ENCODE measurements at regions of chr5 and their contacts with region 1.

Region 1: DNA sequence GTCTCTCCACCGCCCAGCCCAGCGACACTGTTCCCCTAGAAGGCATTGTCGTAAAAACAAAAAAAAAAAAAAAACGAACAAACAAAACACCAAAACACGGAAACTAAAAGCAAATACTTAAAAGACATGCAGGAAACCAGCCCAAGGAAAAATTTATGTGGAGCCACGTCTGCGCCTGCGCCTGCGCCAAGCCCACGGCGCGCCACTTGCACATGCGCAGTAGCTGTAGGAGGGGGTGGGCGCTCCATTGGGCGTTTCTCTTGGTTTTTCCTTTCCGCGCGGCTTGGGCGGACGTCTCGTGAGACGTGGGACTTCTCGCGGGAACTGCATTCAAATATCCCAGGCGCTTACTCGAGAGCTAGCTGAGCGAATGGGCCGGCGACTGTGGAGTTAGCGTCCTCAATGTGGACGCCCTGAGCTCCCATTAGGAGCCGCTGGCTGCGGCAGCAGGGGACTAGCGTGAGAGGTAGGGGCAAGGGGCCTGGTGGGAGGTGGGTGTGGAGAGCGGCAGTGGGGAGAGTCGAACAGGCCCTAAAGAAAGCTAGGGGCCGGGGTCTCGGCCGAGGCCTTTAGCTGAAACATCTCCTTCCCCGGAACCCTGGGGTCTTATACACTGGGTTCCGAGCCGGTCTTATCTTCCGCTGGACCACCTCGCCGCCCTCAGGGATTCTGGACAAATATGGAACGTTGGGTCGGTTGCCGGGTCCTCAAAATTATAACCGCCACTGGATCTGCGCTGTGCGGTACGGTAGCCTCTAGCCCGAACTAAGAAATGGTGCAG is at the start of gene SPDL1:
- DNase-seq: peak; percentile 98
- H3K4me3 ChIP-seq: peak within 1 kb of the TSS; percentile 73 to 84 (median 79)
- H3K27ac ChIP-seq: peak within 1 kb of the TSS; percentile 77 to 84 (median 80)
- H3K4me1 ChIP-seq: peaks cover 5 to 28% (median 18%) of the 10 kb centered on the region in 4 donors
- H3K27me3 ChIP-seq: no peaks in the 10 kb centered on the region
- CTCF ChIP-seq: no peak
- EP300 ChIP-seq: no peak
- POLR2A ChIP-seq: no peak
- total RNA-seq, gene SPDL1: 3.5 to 12.0 (median 7.0) TPM

Region 2: DNA sequence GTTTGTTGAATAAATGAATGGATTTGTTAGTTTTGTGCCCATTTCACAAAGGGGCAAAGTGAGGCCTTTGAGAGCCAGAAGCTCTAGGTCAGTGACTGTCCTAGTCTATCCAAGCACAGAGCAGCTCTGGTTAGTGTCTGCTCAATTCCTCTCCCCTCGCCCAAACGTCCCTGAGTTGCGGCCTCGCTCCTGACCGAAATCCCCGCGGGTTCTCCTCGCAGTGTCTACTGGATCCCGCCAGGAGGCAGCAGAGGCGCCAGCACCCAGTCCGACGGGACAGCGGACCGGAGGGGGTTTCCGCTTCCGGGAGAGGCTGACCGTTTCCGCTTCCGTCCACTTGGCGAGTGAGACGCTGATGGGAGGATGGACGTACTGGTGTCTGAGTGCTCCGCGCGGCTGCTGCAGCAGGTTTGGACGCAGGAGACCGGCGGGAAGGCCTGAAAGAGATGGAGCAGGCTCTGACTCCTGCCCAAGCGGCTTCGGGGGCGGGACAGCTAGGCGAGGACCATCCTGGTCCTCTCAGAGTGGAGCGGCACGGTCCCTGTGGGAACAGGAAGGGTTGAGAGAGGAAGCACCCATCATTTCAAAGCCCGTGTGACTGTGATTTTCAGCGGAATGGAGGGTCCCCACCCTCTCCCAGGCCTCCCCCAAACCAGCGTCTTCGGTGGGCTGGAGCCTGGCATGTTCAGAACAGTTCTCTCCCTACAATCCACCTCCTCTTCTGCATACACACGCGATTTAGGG is 1097.3 kb before region 1 on chr5 and contains the start of gene RARS1:
- intact Hi-C with region 1: loop called (anchors 10 kb)
- DNase-seq: peak; percentile 98
- H3K4me3 ChIP-seq: peak within 1 kb of the TSS; percentile 70 to 93 (median 84)
- H3K27ac ChIP-seq: peak within 1 kb of the TSS; percentile 72 to 88 (median 79)
- H3K4me1 ChIP-seq: peaks cover 6 to 25% (median 15%) of the 10 kb centered on the region in 4 donors
- H3K27me3 ChIP-seq: peaks cover 0 to 4% (median 0%) of the 10 kb centered on the region in 4 donors
- CTCF ChIP-seq: peak in 2 of 3 experiments; percentile 97 to 98
- EP300 ChIP-seq: no peak
- POLR2A ChIP-seq: peak; percentile 75
- total RNA-seq, gene RARS1: 53.8 to 72.3 (median 60.7) TPM

Region 3: DNA sequence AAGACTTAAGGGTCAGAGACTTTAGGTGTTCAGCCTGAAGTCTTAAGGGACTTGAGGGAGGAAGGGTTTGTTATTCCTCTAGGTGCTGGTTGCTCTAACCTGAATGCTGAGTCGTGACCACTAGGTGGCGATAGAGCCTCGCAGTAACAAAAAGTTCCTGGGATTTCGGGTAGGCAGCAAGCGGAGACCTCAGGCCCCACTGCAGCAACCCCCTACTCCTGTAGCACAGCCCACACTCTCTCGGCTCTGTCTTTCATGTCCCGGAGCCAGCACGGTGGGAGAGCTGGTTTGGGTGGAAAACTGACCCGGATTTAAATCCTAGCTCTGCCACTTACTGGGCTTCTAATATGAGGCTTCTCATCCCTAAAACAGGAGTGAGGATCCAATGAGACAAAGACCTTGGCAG is 904.1 kb before region 1 on chr5:
- intact Hi-C with region 1: loop called (anchors 2 kb)
- DNase-seq: no peak
- H3K4me3 ChIP-seq: no peak overlapping the region
- H3K27ac ChIP-seq: no peak overlapping the region
- H3K4me1 ChIP-seq: peaks cover 13 to 35% (median 17%) of the 10 kb centered on the region in 4 donors
- H3K27me3 ChIP-seq: no peaks in the 10 kb centered on the region
- CTCF ChIP-seq: peak; percentile 74 to 93 (median 84)
- EP300 ChIP-seq: no peak
- POLR2A ChIP-seq: no peak

Region 4: GRCh38 chr5:169302491-169303118 is 281.0 kb before region 1 on chr5:
- intact Hi-C with region 1: loop called (anchors 10 kb)
- DNase-seq: no peak
- H3K4me3 ChIP-seq: no peak overlapping the region
- H3K27ac ChIP-seq: peak overlapping the region in 2 of 4 donors; percentile 84 to 89
- H3K4me1 ChIP-seq: peaks cover 8 to 50% (median 42%) of the 10 kb centered on the region in 4 donors
- H3K27me3 ChIP-seq: peaks cover 0 to 19% (median 0%) of the 10 kb centered on the region in 4 donors
- CTCF ChIP-seq: peak; percentile 88 to 95 (median 91)
- EP300 ChIP-seq: no peak
- POLR2A ChIP-seq: no peak

Region 5: DNA sequence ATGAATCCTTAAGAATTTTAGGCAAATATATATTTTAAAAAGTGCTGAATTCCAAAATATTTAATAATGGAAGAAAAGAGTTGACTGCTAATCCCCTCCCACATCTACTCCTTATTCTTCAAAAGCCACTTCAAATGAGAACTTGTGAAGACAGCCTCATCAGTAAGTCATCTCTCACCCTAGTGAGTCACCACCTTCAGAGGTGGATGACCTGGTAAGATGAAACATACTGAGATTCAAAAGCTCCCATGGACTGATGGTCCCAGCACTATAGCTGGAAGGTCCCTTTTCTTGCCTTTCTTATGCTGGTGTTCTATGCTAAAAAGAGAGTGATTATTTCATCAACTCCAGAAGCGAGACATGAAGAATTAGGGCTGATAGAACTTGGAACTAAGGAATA is 37.9 kb before region 1 on chr5:
- intact Hi-C with region 1: no loop called
- DNase-seq: no peak
- H3K4me3 ChIP-seq: no peak overlapping the region
- H3K27ac ChIP-seq: no peak overlapping the region
- H3K4me1 ChIP-seq: no peaks in the 10 kb centered on the region
- H3K27me3 ChIP-seq: peaks cover 0 to 6% (median 0%) of the 10 kb centered on the region in 4 donors
- CTCF ChIP-seq: no peak
- EP300 ChIP-seq: no peak
- POLR2A ChIP-seq: no peak

Region 6: GRCh38 chr5:169763376-169764017 is 179.9 kb after region 1 on chr5:
- intact Hi-C with region 1: no loop called
- DNase-seq: no peak
- H3K4me3 ChIP-seq: no peak overlapping the region
- H3K27ac ChIP-seq: no peak overlapping the region
- H3K4me1 ChIP-seq: no peaks in the 10 kb centered on the region
- H3K27me3 ChIP-seq: no peaks in the 10 kb centered on the region
- CTCF ChIP-seq: no peak
- EP300 ChIP-seq: no peak
- POLR2A ChIP-seq: no peak

Measured in esophagus muscularis mucosa (tissue), 4 donors.